Endothelial cell of umbilical vein (primary cell): ENCODE measurements at regions of chr6 and their contacts with region 1.

Region 1: GRCh38 chr6:36350681-36351571 is 14.2 kb upstream of the BNIP5 start:
- DNase-seq: peak; percentile 97
- H3K4me3 ChIP-seq: no peak overlapping the region
- H3K27ac ChIP-seq: peak overlapping the region; percentile 98
- H3K4me1 ChIP-seq: peaks cover 31% of the 10 kb centered on the region
- H3K27me3 ChIP-seq: peaks cover 0 to 15% of the 10 kb centered on the region in 2 experiments
- CTCF ChIP-seq: no peak
- POLR2A ChIP-seq: peak; percentile 84

Region 2: DNA sequence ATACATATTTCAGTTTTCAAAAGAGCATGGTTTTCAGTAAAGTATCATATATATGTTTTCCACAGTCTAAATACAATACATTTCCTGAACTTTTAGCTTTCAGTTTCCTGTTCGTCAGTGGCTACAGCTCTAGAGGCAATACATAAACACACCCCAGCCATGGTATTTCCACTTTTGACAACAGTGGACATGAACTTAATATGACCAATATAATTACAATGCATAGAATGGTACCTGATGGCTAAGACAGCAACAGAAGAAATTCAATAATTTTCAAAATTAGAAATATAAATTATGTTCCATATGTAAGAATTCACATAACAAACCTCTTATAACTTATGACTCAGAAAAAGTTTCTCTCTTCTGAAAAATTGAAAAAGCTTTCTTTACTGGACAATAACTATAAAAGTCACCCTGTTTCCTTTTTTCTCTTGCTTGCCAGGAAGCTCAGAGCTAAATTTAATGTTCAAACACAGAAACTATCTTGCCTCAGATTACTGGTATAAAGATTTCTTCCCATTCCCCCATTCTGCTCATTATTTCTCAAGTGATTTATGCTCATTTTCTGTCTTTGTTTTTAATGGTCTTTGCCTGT is 681.4 kb before region 1 on chr6:
- CTCF ChIA-PET with region 1: no interaction called
- POLR2A ChIA-PET with region 1: no interaction called
- dilution Hi-C with region 1: no loop called
- intact Hi-C with region 1: loop called (anchors 2 kb)
- DNase-seq: peak; percentile 94
- H3K4me3 ChIP-seq: peak overlapping the region in 2 of 3 experiments; percentile 2 to 59
- H3K27ac ChIP-seq: peak overlapping the region; percentile 95
- H3K4me1 ChIP-seq: peaks cover 51% of the 10 kb centered on the region
- H3K27me3 ChIP-seq: no peaks in the 10 kb centered on the region
- CTCF ChIP-seq: no peak
- POLR2A ChIP-seq: no peak

Region 3: GRCh38 chr6:36123257-36124139 is 227.4 kb before region 1 on chr6:
- CTCF ChIA-PET with region 1: no interaction called
- POLR2A ChIA-PET with region 1: no interaction called
- dilution Hi-C with region 1: no loop called
- intact Hi-C with region 1: loop called (anchors 1 kb)
- DNase-seq: peak; percentile 66
- H3K4me3 ChIP-seq: no peak overlapping the region
- H3K27ac ChIP-seq: no peak overlapping the region
- H3K4me1 ChIP-seq: peaks cover 37% of the 10 kb centered on the region
- H3K27me3 ChIP-seq: no peaks in the 10 kb centered on the region
- CTCF ChIP-seq: peak; percentile 54 to 92
- POLR2A ChIP-seq: no peak

Region 4: GRCh38 chr6:36196880-36197548 is 153.9 kb before region 1 on chr6:
- CTCF ChIA-PET with region 1: no interaction called
- POLR2A ChIA-PET with region 1: no interaction called
- dilution Hi-C with region 1: no loop called
- intact Hi-C with region 1: loop called (anchors 2 kb)
- DNase-seq: peak; percentile 98
- H3K4me3 ChIP-seq: peak overlapping the region; percentile 56 to 90 (median 67)
- H3K27ac ChIP-seq: peak overlapping the region; percentile 83
- H3K4me1 ChIP-seq: peaks cover 12% of the 10 kb centered on the region
- H3K27me3 ChIP-seq: no peaks in the 10 kb centered on the region
- CTCF ChIP-seq: no peak
- POLR2A ChIP-seq: peak; percentile 59

Region 5: DNA sequence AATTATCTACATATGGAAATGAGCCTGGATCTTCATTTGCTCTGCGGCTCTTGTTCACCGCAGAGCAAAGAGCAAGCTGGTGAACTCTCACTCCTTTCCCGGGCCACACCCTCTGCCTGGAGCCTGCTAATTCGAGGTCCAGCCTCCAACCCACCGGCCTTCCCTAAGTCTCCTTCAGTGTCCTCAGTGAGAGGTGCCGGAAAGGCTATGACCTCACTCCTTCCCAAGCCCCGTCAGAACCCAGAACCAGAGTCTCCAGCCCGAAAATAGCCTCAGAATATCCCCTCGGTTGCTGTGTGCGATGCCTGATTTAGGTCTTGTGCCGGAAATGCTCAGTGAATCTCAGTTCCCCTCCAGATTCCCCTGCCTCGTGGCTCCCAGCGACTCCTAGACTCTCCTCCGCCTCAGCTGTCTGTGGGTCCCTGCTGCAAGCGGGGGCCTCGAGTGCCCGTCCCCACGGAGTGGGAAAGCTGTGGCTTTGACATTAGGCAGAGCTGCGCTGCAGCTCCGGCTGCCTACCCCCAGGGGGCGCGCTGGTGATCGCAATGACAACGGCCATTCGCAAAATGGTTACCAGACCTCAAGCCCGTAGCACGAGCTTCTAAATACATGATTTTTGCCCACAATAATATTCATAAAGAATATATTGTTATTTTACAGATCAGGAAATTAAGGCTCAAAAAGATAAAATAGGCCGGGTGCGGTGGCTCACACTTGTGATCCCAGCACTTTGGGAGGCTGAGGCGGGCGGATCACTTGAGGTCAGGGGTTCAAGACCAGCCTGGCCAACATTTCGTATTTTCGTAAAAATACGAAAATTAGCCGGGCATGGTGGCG is 10.1 kb before region 1 on chr6:
- CTCF ChIA-PET with region 1: interaction called, 373 read pairs
- POLR2A ChIA-PET with region 1: interaction called, 3 read pairs
- dilution Hi-C with region 1: no loop called
- intact Hi-C with region 1: loop called (anchors 1 kb)
- DNase-seq: peak; percentile 59
- H3K4me3 ChIP-seq: no peak overlapping the region
- H3K27ac ChIP-seq: no peak overlapping the region
- H3K4me1 ChIP-seq: peaks cover 4% of the 10 kb centered on the region
- H3K27me3 ChIP-seq: peaks cover 36 to 43% of the 10 kb centered on the region in 2 experiments
- CTCF ChIP-seq: peak; percentile 98 to 99
- POLR2A ChIP-seq: no peak

Region 6: GRCh38 chr6:36765594-36766398 is 414.9 kb after region 1 on chr6:
- CTCF ChIA-PET with region 1: no interaction called
- POLR2A ChIA-PET with region 1: no interaction called
- dilution Hi-C with region 1: no loop called
- intact Hi-C with region 1: no loop called
- DNase-seq: peak; percentile 65
- H3K4me3 ChIP-seq: no peak overlapping the region
- H3K27ac ChIP-seq: no peak overlapping the region
- H3K4me1 ChIP-seq: peaks cover 15% of the 10 kb centered on the region
- H3K27me3 ChIP-seq: no peaks in the 10 kb centered on the region
- CTCF ChIP-seq: peak; percentile 90 to 96
- POLR2A ChIP-seq: no peak

Region 7: GRCh38 chr6:37192666-37193065 is 841.7 kb after region 1 on chr6:
- CTCF ChIA-PET with region 1: no interaction called
- POLR2A ChIA-PET with region 1: no interaction called
- dilution Hi-C with region 1: no loop called
- intact Hi-C with region 1: no loop called
- DNase-seq: no peak
- H3K4me3 ChIP-seq: no peak overlapping the region
- H3K27ac ChIP-seq: no peak overlapping the region
- H3K4me1 ChIP-seq: no peaks in the 10 kb centered on the region
- H3K27me3 ChIP-seq: peaks cover 0 to 4% of the 10 kb centered on the region in 2 experiments
- CTCF ChIP-seq: no peak
- POLR2A ChIP-seq: no peak